ENCODE measurements at regions of chr3 and their contacts with region 1.

Region 1: DNA sequence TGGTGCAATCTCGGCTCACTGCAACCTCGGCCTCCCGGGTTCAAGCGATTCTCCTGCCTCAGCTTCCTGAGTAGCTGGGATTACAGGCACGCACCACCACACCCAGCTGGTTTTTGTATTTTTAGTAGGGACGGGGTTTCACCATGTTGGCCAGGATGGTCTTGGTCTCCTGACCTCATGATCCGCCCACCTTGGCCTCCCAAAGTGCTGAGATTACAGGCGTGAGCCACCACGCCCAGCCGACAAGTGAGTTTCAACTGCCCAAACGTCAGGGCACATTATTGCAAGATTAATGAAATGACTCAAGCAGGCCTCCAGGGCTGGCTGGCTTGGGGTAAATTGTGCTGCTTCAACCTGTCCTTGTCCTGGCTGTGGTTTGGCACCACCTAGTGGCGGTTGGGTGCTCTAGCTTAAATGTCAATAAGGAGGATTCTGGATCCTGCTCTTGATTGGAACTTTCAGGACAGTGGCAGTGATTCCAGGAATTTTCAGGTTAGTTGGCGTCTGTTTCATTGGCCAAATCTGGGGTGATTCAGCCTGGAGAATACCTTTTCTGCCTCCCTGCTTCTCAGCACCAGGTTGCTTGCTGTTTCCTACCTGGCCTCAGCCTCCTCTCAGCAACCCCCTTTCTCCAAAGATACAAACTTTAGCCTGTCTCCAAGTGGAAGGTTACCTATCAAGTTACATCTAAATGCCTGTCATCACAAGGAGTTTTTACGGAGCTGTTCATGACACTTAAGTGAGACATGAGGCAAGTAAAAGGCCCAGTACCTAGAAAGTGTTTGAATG is 32.4 kb upstream of the SACM1L start:
- DNase-seq: peak; percentile 92
- H3K4me3 Mint-ChIP-seq: no peak overlapping the region
- H3K27ac Mint-ChIP-seq: no peak overlapping the region
- H3K4me1 Mint-ChIP-seq: peaks cover 19% of the 10 kb centered on the region
- H3K27me3 Mint-ChIP-seq: no peaks in the 10 kb centered on the region

Region 2: GRCh38 chr3:45224824-45225464 is 431.8 kb before region 1 on chr3:
- CTCF ChIA-PET with region 1: interaction called, 4 read pairs
- POLR2A ChIA-PET with region 1: no interaction called
- intact Hi-C with region 1: loop called (anchors 10 kb)
- DNase-seq: peak; percentile 61
- H3K4me3 Mint-ChIP-seq: peak overlapping the region; percentile 65
- H3K27ac Mint-ChIP-seq: no peak overlapping the region
- H3K4me1 Mint-ChIP-seq: peaks cover 14% of the 10 kb centered on the region
- H3K27me3 Mint-ChIP-seq: peaks cover 68% of the 10 kb centered on the region

Region 3: DNA sequence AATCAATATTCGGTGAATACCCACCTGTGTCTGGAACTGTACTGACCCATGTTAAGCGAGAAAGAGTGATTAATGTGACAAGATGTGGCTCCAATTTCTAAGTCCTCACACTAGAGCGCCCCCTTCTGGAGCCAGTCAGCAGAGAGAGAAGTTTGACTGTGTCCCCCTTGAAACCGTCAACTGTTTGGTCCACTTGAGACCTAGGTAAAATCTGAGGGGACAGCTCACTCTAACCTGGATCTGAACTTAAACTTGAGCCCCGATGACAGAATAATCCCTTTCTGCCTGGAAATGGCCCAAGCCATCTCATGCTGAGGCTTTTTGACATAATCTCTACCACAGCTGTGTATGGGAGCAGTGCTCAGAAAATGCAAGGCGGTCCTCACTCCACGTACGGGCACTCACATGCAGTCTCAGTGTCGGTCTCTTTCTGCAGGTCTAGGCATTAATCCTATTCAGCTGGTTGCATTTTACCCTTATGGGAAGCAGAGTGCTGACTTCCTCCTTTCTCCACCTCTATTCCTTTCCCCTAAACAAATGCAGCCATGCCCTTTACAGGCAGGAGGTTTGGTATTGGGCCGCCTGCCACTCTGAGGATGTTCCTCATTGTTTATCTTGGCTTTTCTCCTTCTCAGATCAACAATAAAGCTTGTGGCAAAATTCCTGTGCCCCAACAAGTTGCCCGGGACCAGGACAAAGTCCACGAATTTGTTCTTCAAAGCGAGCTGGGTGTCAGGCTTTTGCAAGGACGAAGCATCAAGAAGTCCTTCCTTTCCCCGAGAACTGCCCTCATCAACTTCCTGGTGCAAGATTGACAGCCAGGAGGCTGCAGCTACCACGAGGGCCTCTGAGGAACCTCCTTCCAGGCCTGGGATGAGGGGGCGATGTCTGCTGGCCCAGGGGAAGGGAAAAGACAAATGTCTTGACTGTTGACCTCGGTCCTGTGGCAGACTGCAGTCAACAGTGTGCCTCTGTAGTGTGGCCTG is 109.8 kb before region 1 on chr3:
- CTCF ChIA-PET with region 1: interaction called, 17 read pairs
- POLR2A ChIA-PET with region 1: no interaction called
- intact Hi-C with region 1: no loop called
- DNase-seq: peak; percentile 56
- H3K4me3 Mint-ChIP-seq: no peak overlapping the region
- H3K27ac Mint-ChIP-seq: no peak overlapping the region
- H3K4me1 Mint-ChIP-seq: peaks cover 3% of the 10 kb centered on the region
- H3K27me3 Mint-ChIP-seq: no peaks in the 10 kb centered on the region

Region 4: DNA sequence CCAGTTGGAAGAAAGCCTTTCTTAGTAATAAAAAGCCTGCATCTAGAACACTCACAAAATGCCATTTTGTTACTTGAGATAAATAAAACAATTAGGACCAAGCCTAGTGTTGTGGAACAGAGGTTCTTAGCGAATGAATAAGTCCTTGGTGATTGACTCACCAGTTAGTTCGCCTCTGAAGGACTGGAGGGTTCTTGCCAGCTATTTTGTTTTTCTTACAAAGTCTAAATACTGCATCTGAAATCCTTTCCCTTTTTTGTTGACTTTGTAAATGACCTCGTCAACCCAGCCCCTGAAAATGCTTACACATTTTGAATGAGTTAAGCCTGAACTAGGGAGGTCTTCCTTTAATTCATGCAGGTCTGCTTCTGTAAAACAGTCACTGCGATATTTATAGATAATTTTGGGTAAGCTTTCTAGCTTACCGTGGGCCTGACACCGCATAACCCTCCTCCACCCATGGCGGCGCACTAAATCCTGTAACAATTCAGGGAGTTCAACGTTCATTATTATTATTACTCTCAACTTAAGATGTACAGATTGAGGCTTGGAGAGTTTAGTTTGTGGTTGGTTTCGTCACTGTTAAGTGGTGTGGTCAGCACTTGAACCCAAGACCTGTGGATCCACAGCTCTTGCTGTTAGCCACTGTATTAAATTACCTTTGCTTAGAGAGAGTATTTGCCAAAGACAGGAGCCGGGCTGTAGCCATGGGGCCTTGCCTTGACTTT is 12.5 kb before region 1 on chr3:
- CTCF ChIA-PET with region 1: interaction called, 12 read pairs
- POLR2A ChIA-PET with region 1: no interaction called
- intact Hi-C with region 1: no loop called
- DNase-seq: no peak
- H3K4me3 Mint-ChIP-seq: no peak overlapping the region
- H3K27ac Mint-ChIP-seq: no peak overlapping the region
- H3K4me1 Mint-ChIP-seq: peaks cover 6% of the 10 kb centered on the region
- H3K27me3 Mint-ChIP-seq: no peaks in the 10 kb centered on the region

Region 5: DNA sequence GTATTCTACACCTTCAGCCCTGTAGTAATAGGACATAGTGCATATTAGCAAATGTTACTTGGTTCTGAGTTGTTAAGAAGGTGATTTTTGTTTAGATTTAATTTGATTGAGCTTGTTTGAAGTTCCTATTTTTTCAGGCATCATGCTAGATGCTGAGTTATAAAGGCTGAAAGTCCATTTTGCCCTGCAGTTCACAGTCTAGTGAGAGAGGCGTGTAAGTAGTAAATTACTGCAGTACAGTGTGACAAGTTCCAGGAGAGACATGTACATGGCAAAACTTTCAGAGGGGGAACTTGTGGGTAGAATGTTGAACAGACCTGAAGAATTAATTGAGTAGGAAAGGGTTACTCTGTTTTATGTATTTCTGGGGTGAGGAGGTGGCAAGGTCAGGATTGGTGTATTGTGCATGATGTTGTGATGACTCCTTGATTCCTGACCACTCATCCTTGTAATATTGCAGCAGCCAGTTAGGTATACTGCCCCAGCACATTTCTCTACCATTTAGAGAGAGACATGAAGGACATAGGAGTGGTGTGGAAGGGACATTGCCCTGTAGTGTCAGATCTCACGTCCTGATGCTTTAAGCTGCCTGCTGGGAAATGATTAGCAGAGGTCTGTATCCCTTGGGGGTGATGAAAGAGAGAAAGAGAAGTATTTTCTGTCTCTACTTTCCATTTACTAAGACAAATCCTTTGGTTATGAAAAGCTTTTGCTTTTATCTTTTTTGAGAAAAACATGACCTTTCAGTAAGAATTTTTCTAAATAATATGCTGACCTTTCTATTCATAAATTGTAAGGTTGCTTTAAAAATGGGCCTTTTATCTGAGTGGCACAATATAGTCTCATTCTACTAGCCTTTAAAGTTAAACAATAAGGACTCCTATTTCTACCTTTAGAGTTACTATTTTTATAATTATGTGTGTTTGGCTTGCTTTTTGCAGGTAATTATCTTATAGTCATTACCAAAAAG is 49.4 kb after region 1 on chr3:
- CTCF ChIA-PET with region 1: interaction called, 12 read pairs
- POLR2A ChIA-PET with region 1: no interaction called
- intact Hi-C with region 1: no loop called
- DNase-seq: no peak
- H3K4me3 Mint-ChIP-seq: no peak overlapping the region
- H3K27ac Mint-ChIP-seq: peak overlapping the region; percentile 56
- H3K4me1 Mint-ChIP-seq: peaks cover 45% of the 10 kb centered on the region
- H3K27me3 Mint-ChIP-seq: no peaks in the 10 kb centered on the region

Region 6: DNA sequence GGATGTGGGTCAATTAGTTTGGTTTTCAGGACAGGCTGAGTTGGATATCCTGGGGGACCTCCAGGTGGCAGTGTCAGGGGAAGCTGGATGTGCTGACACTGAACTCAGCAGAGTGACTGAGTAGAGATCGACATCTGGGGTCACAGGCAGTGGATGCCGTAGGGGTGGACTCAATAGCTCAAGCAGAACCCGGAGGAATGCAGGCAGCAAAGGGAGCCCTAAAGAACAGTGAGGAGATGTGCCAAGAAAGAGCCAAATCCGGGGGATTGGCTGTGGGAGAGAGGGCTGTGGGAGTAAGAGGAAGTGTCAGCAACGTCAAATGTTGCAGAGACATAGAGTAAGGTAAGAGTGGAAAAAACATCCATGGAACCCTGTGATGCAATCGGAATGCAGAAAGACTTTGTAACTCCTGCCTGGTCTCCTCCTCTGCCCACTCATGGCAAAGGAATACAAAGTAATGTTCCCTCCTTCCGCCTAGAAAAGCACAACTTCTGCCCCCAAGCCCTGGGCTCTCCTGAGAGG is 738.5 kb after region 1 on chr3:
- CTCF ChIA-PET with region 1: no interaction called
- POLR2A ChIA-PET with region 1: no interaction called
- intact Hi-C with region 1: no loop called
- DNase-seq: no peak
- H3K4me3 Mint-ChIP-seq: no peak overlapping the region
- H3K27ac Mint-ChIP-seq: no peak overlapping the region
- H3K4me1 Mint-ChIP-seq: peaks cover 2% of the 10 kb centered on the region
- H3K27me3 Mint-ChIP-seq: peaks cover 7% of the 10 kb centered on the region

Measured in activated CD4-positive, alpha-beta memory T cell treated with anti-CD3 and anti-CD28 coated beads for 36 hours (primary cell).